Psoas muscle (tissue), 8 donors: ENCODE measurements at regions of chr10 and their contacts with region 1.

Region 1: DNA sequence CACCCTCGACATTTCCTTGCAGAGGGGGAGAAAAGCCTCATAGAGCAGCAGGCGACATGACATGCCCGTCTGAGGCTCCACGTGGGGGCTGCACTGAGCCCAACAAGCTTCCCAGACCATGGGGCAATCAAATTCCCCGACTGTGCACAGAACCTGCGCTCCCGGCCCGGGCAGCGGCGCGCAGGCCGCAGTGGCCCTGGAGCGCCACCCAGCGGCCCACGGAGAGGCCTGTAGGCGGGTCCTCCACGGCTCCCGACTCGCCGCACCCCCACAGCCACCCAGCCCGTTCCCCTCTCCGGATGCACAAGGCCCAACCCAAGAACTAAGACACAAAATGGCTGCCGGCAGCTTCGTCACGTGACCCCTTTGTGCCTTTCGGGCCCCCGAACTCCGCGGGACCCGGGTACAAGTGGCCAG is 816 bp downstream of the EPC1 start:
- DNase-seq: peak; percentile 97 to 98
- ATAC-seq: peak; percentile 92 to 96 (median 95)
- H3K4me3 ChIP-seq: peak overlapping the region; percentile 82
- H3K27ac ChIP-seq: peak overlapping the region; percentile 100
- H3K4me1 ChIP-seq: peaks cover 58% of the 10 kb centered on the region
- H3K27me3 ChIP-seq: no peaks in the 10 kb centered on the region
- CTCF ChIP-seq: peak; percentile 97

Region 2: GRCh38 chr10:32055813-32056600 is 290.1 kb before region 1 on chr10 and contains the start of gene KIF5B:
- intact Hi-C with region 1: loop called in 1 of 2 experiments (anchors 10 kb)
- DNase-seq: peak; percentile 92 to 95
- ATAC-seq: peak; percentile 95 to 96 (median 96)
- H3K4me3 ChIP-seq: peak within 1 kb of the TSS; percentile 78
- H3K27ac ChIP-seq: peak within 1 kb of the TSS; percentile 98
- H3K4me1 ChIP-seq: peaks cover 35% of the 10 kb centered on the region
- H3K27me3 ChIP-seq: no peaks in the 10 kb centered on the region
- CTCF ChIP-seq: no peak
- total RNA-seq, gene KIF5B: 87.7 to 124 (median 100) TPM

Region 3: DNA sequence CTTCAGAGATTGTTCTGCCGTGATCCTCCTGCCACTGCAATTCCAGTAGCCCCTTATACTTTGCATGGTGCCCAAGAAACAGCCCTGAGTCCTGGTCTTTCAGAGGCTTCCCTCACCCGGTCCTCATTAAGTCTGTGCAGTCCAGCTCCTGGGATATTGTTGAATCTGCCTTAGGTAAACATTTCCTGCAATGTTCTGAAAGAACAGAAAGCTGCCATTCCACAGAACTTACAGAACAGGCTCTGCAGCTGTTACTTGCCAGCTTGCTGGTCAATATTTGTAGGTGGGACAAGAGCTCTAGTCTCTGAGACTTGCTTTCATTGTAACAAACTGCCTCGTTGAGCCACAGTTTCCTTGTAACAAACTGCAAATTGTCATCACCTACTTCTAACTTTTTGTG is 174.9 kb before region 1 on chr10:
- intact Hi-C with region 1: no loop called
- DNase-seq: no peak
- ATAC-seq: no peak
- H3K4me3 ChIP-seq: no peak overlapping the region
- H3K27ac ChIP-seq: no peak overlapping the region
- H3K4me1 ChIP-seq: no peaks in the 10 kb centered on the region
- H3K27me3 ChIP-seq: no peaks in the 10 kb centered on the region
- CTCF ChIP-seq: no peak

Region 4: DNA sequence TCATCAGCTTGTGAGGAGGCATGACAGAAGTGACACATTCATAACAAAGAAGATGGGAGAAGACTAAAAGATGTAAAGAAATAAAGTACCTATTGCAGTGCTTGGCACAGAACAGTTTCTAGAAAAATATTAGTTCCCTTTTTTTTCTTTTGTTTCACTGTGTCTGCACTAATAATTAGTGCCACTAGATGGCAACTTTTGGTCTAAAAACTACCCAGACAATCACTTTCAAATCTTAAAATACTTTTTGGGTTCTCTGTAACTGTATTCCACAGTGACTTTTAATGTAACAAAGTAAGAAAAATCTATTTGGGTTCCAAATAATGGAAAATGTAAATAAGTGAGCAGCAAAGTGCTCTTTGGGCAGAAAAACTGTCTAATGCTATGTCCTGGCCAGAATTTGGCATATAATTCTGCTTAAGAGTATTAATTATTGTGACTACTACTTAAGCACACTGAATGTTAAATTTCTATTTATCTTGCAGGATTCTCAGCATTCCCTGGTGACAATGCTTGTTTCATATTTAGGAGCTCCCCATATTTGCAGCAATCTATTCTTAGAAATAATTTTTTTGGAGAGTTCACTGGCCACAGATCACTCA is 155.2 kb before region 1 on chr10:
- intact Hi-C with region 1: loop called in 1 of 2 experiments (anchors 5 kb)
- DNase-seq: no peak
- ATAC-seq: peak in 2 of 4 donors; percentile 39 to 67
- H3K4me3 ChIP-seq: no peak overlapping the region
- H3K27ac ChIP-seq: no peak overlapping the region
- H3K4me1 ChIP-seq: no peaks in the 10 kb centered on the region
- H3K27me3 ChIP-seq: no peaks in the 10 kb centered on the region
- CTCF ChIP-seq: peak; percentile 82

Region 5: DNA sequence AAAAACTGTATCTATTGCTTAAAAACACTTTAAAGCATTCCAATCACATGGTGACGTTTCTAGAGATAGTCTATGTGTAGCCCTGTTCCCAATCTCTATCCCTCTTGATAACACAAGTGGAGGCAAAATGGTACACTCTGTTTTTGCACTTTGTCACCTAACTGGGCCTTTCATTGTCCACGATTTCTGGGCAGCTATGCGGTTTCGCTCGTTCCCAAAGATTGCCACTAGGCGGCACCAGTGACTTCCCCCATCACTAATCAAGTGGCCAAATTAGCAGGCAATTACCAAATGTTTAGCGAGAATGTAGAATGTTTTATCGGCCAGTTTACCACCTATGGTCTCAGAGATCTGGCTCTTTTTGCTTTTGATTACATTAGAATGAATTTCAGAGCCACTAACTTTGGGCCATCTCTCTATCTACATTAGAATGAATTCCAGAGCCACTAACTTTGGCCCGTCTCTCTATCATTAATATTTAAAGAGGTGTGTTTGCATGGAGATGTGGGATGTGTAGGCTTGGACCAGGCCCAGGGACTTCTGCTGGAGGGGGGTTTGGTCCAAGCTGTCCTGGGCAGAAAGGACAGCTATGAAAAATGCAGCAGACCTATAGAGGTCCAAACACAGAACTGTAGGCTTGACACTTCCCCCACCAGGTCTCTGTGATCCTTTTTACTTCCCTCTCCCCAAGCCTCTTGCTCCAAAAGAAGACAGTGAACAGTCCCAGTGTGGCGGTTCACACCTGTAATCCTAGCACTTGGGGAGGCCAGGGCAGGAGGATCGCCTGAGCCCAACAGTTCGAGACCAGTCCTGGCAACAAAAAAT is 89.3 kb before region 1 on chr10:
- intact Hi-C with region 1: loop called (anchors 2 to 5 kb)
- DNase-seq: peak; percentile 44 to 68
- ATAC-seq: peak; percentile 37 to 84 (median 68)
- H3K4me3 ChIP-seq: no peak overlapping the region
- H3K27ac ChIP-seq: no peak overlapping the region
- H3K4me1 ChIP-seq: no peaks in the 10 kb centered on the region
- H3K27me3 ChIP-seq: no peaks in the 10 kb centered on the region
- CTCF ChIP-seq: peak; percentile 81

Region 6: DNA sequence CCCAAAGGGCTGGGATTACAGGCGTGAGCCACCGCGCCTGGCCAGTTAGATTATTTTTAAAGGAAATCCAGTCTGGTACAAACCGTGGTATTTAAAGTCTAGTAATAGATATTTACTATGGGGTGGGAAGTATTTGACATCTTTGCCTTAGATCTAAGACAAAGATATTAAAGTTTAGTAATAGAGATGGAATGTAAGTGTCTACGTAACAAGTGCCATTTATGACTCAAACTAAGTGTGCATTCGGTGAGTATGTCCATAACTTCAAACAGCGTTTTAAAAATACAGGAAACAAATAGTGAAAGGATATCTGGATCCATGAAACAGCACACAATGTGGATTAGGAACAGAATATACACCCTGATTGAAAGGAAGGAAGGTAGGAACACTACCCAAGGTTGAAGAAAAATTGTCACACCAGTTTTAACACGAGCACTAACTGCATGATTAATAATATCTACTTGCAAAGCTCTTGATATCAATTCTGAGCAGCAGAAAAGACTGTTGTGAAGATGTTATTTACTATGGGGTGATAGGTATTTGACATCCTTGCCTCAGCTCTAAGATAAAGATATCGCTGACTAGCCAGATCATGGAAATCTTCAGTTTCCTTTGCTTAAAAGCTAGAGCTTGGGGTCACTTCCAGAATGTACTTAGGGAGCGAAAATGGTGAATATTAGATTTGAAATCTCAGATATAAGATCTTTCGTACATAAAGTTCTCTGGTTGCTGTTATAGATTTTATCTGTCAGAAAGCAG is 47.9 kb before region 1 on chr10:
- intact Hi-C with region 1: loop called in 1 of 2 experiments (anchors 10 kb)
- DNase-seq: no peak
- ATAC-seq: no peak
- H3K4me3 ChIP-seq: no peak overlapping the region
- H3K27ac ChIP-seq: no peak overlapping the region
- H3K4me1 ChIP-seq: peaks cover 6% of the 10 kb centered on the region
- H3K27me3 ChIP-seq: no peaks in the 10 kb centered on the region
- CTCF ChIP-seq: no peak

Region 7: GRCh38 chr10:32378363-32379317 is 32.5 kb after region 1 on chr10:
- intact Hi-C with region 1: loop called in 1 of 2 experiments (anchors 2 kb)
- DNase-seq: peak; percentile 95 to 96
- ATAC-seq: peak; percentile 95 to 98 (median 96)
- H3K4me3 ChIP-seq: peak overlapping the region; percentile 69
- H3K27ac ChIP-seq: peak overlapping the region; percentile 80
- H3K4me1 ChIP-seq: peaks cover 39% of the 10 kb centered on the region
- H3K27me3 ChIP-seq: no peaks in the 10 kb centered on the region
- CTCF ChIP-seq: no peak

Region 8: GRCh38 chr10:32556783-32557395 is 210.7 kb after region 1 on chr10:
- intact Hi-C with region 1: no loop called
- DNase-seq: no peak
- ATAC-seq: no peak
- H3K4me3 ChIP-seq: no peak overlapping the region
- H3K27ac ChIP-seq: no peak overlapping the region
- H3K4me1 ChIP-seq: no peaks in the 10 kb centered on the region
- H3K27me3 ChIP-seq: no peaks in the 10 kb centered on the region
- CTCF ChIP-seq: no peak

Region 9: GRCh38 chr10:33412653-33413361 is 1066.7 kb after region 1 on chr10:
- intact Hi-C with region 1: no loop called
- DNase-seq: peak; percentile 48 to 56
- ATAC-seq: peak; percentile 36 to 87 (median 60)
- H3K4me3 ChIP-seq: no peak overlapping the region
- H3K27ac ChIP-seq: peak overlapping the region; percentile 16
- H3K4me1 ChIP-seq: no peaks in the 10 kb centered on the region
- H3K27me3 ChIP-seq: peaks cover 0 to 1% (median 0%) of the 10 kb centered on the region in 3 donors
- CTCF ChIP-seq: no peak